Endothelial cell of umbilical vein (primary cell): ENCODE measurements at regions of chr17 and their contacts with region 1.

Region 1: DNA sequence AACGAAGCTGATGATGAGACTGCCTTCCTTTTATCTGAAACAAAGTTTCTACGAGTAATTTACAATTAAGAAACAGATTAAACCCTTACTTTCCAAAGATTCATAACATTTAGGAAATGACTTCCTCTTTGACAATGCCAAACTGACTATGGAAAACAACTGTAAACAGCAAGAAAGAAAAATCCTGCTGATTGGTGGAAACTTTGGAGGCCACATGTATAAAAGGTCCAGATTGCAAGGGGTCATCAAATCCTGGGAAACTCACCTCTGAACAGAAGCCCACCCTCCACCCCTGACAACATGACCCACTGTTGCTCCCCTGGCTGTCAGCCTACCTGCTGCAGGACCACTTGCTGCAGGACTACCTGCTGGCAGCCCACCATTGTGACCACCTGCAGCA is at the start of gene KRTAP9-6:
- DNase-seq: no peak
- H3K4me3 ChIP-seq: no peak within 1 kb of the TSS
- H3K27ac ChIP-seq: no peak within 1 kb of the TSS
- H3K4me1 ChIP-seq: no peaks in the 10 kb centered on the region
- H3K27me3 ChIP-seq: no peaks in the 10 kb centered on the region
- CTCF ChIP-seq: no peak
- POLR2A ChIP-seq: no peak
- total RNA-seq, gene KRTAP9-6: not detected in 2 replicates

Region 2: GRCh38 chr17:41278176-41278955 is 13.3 kb after region 1 on chr17:
- CTCF ChIA-PET with region 1: interaction called, 6 read pairs
- POLR2A ChIA-PET with region 1: no interaction called
- dilution Hi-C with region 1: no loop called
- intact Hi-C with region 1: loop called (anchors 1 kb)
- DNase-seq: no peak
- H3K4me3 ChIP-seq: no peak overlapping the region
- H3K27ac ChIP-seq: no peak overlapping the region
- H3K4me1 ChIP-seq: no peaks in the 10 kb centered on the region
- H3K27me3 ChIP-seq: no peaks in the 10 kb centered on the region
- CTCF ChIP-seq: no peak
- POLR2A ChIP-seq: no peak